ENCODE measurements at regions of chr19 and their contacts with region 1.

Region 1: DNA sequence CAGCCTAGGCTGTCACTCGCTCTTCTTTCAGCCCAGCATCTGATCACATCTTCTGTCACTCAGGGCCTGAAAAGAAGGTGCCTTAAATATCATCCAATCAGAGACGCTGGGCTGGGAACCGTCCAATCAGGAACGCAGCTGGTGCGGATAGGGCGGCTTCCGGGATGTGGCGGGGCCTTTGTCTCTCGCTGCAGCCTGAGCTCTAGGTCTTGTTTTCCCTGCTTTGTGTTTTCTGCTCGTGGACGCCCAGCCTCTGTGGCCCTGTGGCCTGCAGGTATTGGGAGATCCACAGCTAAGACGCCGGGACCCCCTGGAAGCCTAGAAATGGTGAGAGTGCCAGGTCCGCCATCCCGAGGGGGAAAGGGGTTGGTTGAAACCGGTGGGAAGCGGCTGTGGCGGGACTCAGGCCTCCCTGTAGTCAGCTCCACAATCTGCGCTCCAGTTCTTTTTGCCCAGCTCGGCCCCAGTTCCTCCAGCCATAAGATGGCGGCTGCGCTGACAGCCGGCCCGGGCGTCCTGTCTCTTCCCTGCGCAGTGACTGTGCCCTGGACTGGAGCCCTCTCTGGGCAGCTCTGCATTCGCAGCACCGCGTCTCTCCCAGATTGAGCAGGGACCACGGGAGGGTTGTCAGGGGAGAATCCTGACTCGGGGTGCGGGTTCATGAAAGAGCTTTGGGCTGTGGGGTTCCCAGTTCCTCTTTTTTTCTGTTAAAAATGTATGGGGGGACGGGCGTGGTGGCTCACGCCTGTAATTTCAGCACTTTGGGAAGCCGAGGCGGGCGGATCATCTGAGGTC is at the start of gene ZNF85:
- DNase-seq: peak; percentile 63
- H3K4me3 ChIP-seq: peak within 1 kb of the TSS; percentile 84
- H3K27ac ChIP-seq: peak within 1 kb of the TSS; percentile 92
- H3K27me3 ChIP-seq: no peaks in the 10 kb centered on the region
- CTCF ChIP-seq: no peak
- polyA plus RNA-seq, gene ZNF85: 4.8 and 5.8 TPM in 2 replicates

Region 2: DNA sequence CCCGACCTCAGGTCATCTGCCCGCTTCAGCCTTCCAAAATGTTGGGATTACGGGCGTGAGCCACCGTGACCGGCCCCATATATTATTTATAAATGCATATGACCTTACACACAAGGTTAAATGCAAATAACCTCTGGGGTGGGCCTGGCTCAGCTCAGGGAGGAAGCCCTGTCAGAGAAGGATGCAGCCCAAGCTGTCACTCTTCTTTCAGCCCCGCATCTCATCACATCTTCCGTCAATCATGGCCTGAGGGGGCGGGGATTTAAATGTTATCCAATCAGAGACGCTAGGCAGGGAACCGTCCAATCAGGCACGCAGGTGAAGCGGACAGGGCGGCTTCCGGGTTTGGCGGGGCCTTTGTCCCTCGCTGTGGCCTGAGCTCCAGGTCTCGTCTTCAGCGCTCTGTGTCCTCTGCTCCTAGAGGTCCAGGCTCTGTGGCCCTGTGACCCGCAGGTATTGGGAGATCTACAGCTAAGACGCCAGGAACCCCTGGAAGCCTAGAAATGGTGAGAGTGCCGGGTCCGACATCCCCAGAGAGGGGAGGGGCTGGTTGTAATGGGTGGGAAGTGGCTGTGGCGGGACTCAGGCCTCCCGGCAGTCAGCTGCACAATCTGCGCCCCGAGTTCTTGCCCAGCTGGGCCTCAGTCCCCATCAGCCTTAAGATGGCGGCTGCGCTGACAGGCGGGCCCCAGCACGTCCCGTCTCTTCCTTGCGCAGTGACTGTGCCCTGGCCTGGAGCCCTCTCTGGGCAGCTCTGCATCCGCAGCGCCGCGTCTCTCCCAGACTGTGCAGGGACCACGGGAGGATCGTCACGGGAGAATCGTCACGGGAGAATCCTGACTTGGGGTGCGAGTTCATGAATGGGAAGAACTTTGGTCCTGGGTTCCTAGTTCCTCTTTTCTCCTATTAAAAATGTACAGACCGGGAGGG is 97.3 kb after region 1 on chr19 and contains the start of gene ZNF430:
- CTCF ChIA-PET with region 1: no interaction called
- POLR2A ChIA-PET with region 1: interaction called, 10 read pairs
- DNase-seq: peak; percentile 73
- H3K4me3 ChIP-seq: peak within 1 kb of the TSS; percentile 87
- H3K27ac ChIP-seq: peak within 1 kb of the TSS; percentile 83
- H3K27me3 ChIP-seq: no peaks in the 10 kb centered on the region
- CTCF ChIP-seq: no peak
- polyA plus RNA-seq, gene ZNF430: 4.8 and 5.7 TPM in 2 replicates

Region 3: DNA sequence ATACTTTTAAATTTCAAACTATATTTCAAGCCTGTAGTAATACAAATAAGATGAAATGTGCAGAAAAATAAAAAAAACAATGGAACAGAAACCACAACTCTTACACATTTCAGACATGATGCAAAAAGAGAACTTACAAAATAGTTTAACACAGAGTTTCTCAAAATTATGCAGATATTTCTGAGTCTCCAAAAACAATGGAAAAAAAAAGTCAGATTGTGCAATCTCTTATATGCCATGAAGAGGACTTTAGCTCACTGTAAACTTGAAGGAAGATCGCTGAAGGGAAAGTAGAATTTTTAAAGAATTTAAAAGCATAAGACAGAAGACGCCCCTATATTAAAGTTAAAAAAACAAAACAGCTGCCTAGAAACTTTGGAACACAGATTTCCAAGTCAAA is 385.5 kb after region 1 on chr19:
- CTCF ChIA-PET with region 1: no interaction called
- POLR2A ChIA-PET with region 1: no interaction called
- DNase-seq: no peak
- H3K4me3 ChIP-seq: no peak overlapping the region
- H3K27ac ChIP-seq: no peak overlapping the region
- H3K27me3 ChIP-seq: no peaks in the 10 kb centered on the region
- CTCF ChIP-seq: no peak

Measured in AG04450 (cell line).